CD8-positive, alpha-beta T cell (primary cell): ENCODE measurements at regions of chr11 and their contacts with region 1.

Region 1: GRCh38 chr11:19553683-19554333 is 158.8 kb upstream of the NAV2 start:
- DNase-seq: peak; percentile 27 to 78 (median 65)
- ATAC-seq: peak; percentile 62
- H3K4me3 ChIP-seq: no peak overlapping the region
- H3K4me3 Mint-ChIP-seq: no peak overlapping the region
- H3K27ac ChIP-seq: no peak overlapping the region
- H3K27ac Mint-ChIP-seq: no peak overlapping the region
- H3K4me1 ChIP-seq: no peaks in the 10 kb centered on the region
- H3K4me1 Mint-ChIP-seq: peaks cover 4% of the 10 kb centered on the region
- H3K27me3 ChIP-seq: peaks cover 0 to 2% of the 10 kb centered on the region in 2 experiments
- H3K27me3 Mint-ChIP-seq: peaks cover 13% of the 10 kb centered on the region
- CTCF ChIP-seq: peak; percentile 59

Region 2: GRCh38 chr11:19160847-19161246 is 393.0 kb before region 1 on chr11:
- CTCF ChIA-PET with region 1: no interaction called
- POLR2A ChIA-PET with region 1: no interaction called
- intact Hi-C with region 1: loop called in 1 of 2 experiments (anchors 10 kb)
- DNase-seq: no peak
- ATAC-seq: no peak
- H3K4me3 ChIP-seq: no peak overlapping the region
- H3K4me3 Mint-ChIP-seq: no peak overlapping the region
- H3K27ac ChIP-seq: no peak overlapping the region
- H3K27ac Mint-ChIP-seq: no peak overlapping the region
- H3K4me1 ChIP-seq: no peaks in the 10 kb centered on the region
- H3K4me1 Mint-ChIP-seq: no peaks in the 10 kb centered on the region
- H3K27me3 ChIP-seq: no peaks in the 10 kb centered on the region
- H3K27me3 Mint-ChIP-seq: no peaks in the 10 kb centered on the region
- CTCF ChIP-seq: no peak

Region 3: DNA sequence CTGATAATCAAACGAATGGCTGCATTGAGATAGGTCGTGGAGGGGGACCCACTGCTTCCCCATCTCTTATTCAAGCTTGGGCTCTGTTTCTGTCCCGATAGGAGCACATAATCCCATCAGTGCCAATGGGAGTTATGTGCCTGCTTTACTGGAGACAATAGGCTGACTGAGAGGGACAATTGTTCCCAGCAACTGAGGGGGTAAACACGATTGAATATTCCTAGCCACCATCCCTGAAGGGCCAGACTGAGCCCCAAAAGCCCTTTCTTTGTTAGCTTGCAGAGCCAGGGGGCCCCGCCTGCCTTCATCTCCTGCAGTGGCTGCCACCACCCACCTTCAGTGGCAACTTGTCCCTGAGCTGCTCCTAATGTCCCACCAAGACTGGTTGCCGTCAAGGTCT is 13.9 kb before region 1 on chr11:
- CTCF ChIA-PET with region 1: interaction called, 29 read pairs
- POLR2A ChIA-PET with region 1: no interaction called
- intact Hi-C with region 1: no loop called
- DNase-seq: no peak
- ATAC-seq: no peak
- H3K4me3 ChIP-seq: no peak overlapping the region
- H3K4me3 Mint-ChIP-seq: no peak overlapping the region
- H3K27ac ChIP-seq: no peak overlapping the region
- H3K27ac Mint-ChIP-seq: no peak overlapping the region
- H3K4me1 ChIP-seq: no peaks in the 10 kb centered on the region
- H3K4me1 Mint-ChIP-seq: no peaks in the 10 kb centered on the region
- H3K27me3 ChIP-seq: no peaks in the 10 kb centered on the region
- H3K27me3 Mint-ChIP-seq: peaks cover 4% of the 10 kb centered on the region
- CTCF ChIP-seq: no peak

Region 4: GRCh38 chr11:19742588-19743292 is 188.9 kb after region 1 on chr11:
- CTCF ChIA-PET with region 1: interaction called, 51 read pairs
- POLR2A ChIA-PET with region 1: no interaction called
- intact Hi-C with region 1: no loop called
- DNase-seq: peak; percentile 34 to 81 (median 68)
- ATAC-seq: peak; percentile 69
- H3K4me3 ChIP-seq: no peak overlapping the region
- H3K4me3 Mint-ChIP-seq: no peak overlapping the region
- H3K27ac ChIP-seq: no peak overlapping the region
- H3K27ac Mint-ChIP-seq: no peak overlapping the region
- H3K4me1 ChIP-seq: no peaks in the 10 kb centered on the region
- H3K4me1 Mint-ChIP-seq: no peaks in the 10 kb centered on the region
- H3K27me3 ChIP-seq: no peaks in the 10 kb centered on the region
- H3K27me3 Mint-ChIP-seq: peaks cover 5% of the 10 kb centered on the region
- CTCF ChIP-seq: peak; percentile 68